ENCODE measurements at regions of chr20 and their contacts with region 1.

Region 1: GRCh38 chr20:41136680-41137613 is at the start of gene PLCG1:
- DNase-seq: peak; percentile 61 to 90 (median 83)
- ATAC-seq: peak; percentile 70
- H3K4me3 ChIP-seq: peak within 1 kb of the TSS; percentile 72 to 81
- H3K4me3 Mint-ChIP-seq: peak within 1 kb of the TSS; percentile 92
- H3K27ac ChIP-seq: peak within 1 kb of the TSS; percentile 60 to 89
- H3K27ac Mint-ChIP-seq: peak within 1 kb of the TSS; percentile 93
- H3K4me1 ChIP-seq: peaks cover 58% of the 10 kb centered on the region
- H3K4me1 Mint-ChIP-seq: peaks cover 63% of the 10 kb centered on the region
- H3K27me3 ChIP-seq: no peaks in the 10 kb centered on the region
- H3K27me3 Mint-ChIP-seq: no peaks in the 10 kb centered on the region
- CTCF ChIP-seq: no peak
- total RNA-seq, gene PLCG1: 335 to 366 TPM

Region 2: DNA sequence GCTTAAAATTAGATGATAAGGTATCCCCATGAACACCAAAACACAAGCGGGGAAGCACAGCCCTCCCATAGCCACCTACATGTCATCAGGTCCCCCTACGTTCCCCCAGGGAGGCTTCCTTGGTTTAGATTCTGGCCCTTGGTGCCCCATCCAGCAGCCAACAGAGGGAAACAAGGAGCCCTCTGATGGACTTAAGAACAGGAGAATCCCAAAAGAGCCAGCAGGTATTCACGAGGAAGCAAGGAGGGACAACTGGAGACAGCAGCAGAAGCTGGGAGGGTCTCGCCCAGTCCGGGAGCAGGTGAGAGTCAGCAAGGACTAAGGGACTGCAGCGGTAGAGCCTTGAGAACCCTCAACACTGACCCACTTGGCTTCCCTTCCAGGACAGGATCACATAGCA is 166.7 kb before region 1 on chr20:
- CTCF ChIA-PET with region 1: interaction called, 6 read pairs
- POLR2A ChIA-PET with region 1: no interaction called
- intact Hi-C with region 1: loop called in 1 of 2 experiments (anchors 1 kb)
- DNase-seq: peak in 1 of 9 experiments; percentile 44
- ATAC-seq: no peak
- H3K4me3 ChIP-seq: no peak overlapping the region
- H3K4me3 Mint-ChIP-seq: no peak overlapping the region
- H3K27ac ChIP-seq: no peak overlapping the region
- H3K27ac Mint-ChIP-seq: no peak overlapping the region
- H3K4me1 ChIP-seq: no peaks in the 10 kb centered on the region
- H3K4me1 Mint-ChIP-seq: peaks cover 7% of the 10 kb centered on the region
- H3K27me3 ChIP-seq: no peaks in the 10 kb centered on the region
- H3K27me3 Mint-ChIP-seq: peaks cover 3% of the 10 kb centered on the region
- CTCF ChIP-seq: no peak

Region 3: DNA sequence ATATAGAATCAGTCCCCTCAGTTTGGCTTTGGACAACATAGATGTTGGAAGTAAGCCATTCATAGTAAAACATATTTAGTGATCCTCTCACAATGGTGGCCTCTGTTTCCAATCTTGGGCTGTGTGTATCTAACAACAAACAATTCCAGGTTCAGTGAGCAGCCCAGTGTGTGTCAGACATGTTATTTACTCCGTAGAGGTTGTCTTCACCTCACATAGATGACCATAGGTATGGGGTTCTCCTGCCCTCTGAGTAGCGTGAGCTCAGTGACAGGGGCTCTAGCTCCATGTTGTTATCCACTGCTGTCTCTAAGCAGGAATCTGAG is 16.7 kb before region 1 on chr20:
- CTCF ChIA-PET with region 1: interaction called, 22 read pairs
- POLR2A ChIA-PET with region 1: no interaction called
- intact Hi-C with region 1: no loop called
- DNase-seq: no peak
- ATAC-seq: no peak
- H3K4me3 ChIP-seq: no peak overlapping the region
- H3K4me3 Mint-ChIP-seq: no peak overlapping the region
- H3K27ac ChIP-seq: no peak overlapping the region
- H3K27ac Mint-ChIP-seq: no peak overlapping the region
- H3K4me1 ChIP-seq: no peaks in the 10 kb centered on the region
- H3K4me1 Mint-ChIP-seq: no peaks in the 10 kb centered on the region
- H3K27me3 ChIP-seq: no peaks in the 10 kb centered on the region
- H3K27me3 Mint-ChIP-seq: no peaks in the 10 kb centered on the region
- CTCF ChIP-seq: no peak

Region 4: DNA sequence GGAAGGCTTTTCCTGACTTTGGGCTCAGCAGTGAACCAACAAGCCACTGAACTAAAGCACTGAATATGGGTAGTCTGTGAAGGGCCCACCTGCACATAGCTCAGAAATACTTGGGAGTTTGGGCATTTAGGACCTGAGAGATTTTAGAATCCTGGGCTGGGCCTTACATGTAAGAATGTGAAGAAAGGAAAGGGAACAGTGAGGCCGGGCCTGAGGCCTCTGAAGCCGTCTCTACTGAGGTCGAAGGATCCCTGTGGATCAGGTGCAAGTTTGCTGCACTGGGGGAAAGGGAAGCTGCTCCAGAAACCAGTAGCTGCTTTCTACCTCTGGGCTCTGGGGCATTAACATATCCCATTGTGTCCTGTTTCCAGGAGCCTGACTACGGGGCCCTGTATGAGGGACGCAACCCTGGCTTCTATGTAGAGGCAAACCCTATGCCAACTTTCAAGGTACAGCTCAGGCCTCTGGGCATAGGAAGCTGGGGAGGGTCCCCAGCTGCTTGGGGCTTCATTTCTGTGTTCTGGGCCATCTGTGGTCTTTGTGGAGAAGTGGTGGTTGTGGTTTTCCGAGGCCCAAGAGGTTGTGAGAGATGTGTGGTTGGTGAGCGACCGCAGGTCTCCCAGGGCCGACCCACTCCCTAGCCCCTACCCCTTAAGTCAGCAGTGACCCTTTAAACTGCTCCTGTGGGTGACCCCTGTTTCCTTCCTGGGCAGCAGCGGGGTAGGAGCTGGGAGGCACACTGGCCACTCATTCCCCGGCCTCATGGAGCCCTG is 30.7 kb after region 1 on chr20:
- CTCF ChIA-PET with region 1: interaction called, 94 read pairs
- POLR2A ChIA-PET with region 1: interaction called, 317 read pairs
- intact Hi-C with region 1: loop called in 1 of 2 experiments (anchors 5 kb)
- DNase-seq: no peak
- ATAC-seq: no peak
- H3K4me3 ChIP-seq: no peak overlapping the region
- H3K4me3 Mint-ChIP-seq: no peak overlapping the region
- H3K27ac ChIP-seq: peak overlapping the region; percentile 46 to 49
- H3K27ac Mint-ChIP-seq: peak overlapping the region; percentile 78
- H3K4me1 ChIP-seq: peaks cover 60% of the 10 kb centered on the region
- H3K4me1 Mint-ChIP-seq: peaks cover 60% of the 10 kb centered on the region
- H3K27me3 ChIP-seq: no peaks in the 10 kb centered on the region
- H3K27me3 Mint-ChIP-seq: no peaks in the 10 kb centered on the region
- CTCF ChIP-seq: no peak

Region 5: DNA sequence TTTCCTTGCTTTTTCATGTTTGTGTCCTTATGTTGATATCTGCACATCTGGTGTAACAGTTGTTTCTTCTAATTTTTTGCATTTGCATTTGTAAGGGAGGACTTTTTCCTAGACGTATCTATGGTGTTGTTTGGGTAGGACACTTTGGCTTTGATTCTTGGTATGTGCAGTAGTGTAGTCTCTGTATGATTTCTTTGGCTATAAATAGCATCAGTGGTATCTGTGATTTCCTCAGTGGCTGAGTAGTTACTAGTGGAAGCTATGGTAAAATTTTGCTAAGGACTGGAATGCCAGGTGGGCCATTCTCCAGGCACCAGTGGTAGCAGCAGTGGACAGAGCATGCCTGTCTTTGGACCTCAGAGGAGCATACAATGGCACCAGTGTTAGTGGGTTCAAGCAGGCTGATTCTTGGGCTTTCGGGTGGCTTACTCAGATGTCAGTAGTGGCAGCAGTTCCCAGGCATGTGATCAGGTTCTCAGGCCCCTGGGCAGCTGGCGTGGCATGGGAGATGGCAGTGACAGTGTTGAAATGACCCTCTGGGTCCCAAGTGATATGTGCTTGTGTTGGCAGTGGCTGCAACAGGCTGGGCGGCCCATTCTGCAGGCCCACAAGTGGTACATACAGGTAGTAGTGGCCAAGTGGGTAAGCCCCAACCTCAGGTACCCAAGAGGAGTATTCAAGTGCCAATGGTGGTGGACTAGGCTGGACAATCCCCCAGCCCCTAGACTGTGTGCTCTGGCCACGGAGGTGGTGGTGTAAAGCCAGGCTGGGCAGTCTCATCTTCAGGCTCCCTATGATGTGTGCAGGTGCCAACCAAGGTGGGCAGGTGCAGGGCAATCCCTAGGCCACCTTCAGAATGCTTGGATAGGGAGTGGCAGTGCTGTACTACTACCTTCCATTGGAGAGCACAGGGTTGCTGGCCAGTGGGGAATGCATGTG is 54.9 kb after region 1 on chr20:
- CTCF ChIA-PET with region 1: interaction called, 11 read pairs
- POLR2A ChIA-PET with region 1: no interaction called
- intact Hi-C with region 1: no loop called
- DNase-seq: no peak
- ATAC-seq: no peak
- H3K4me3 ChIP-seq: no peak overlapping the region
- H3K4me3 Mint-ChIP-seq: no peak overlapping the region
- H3K27ac ChIP-seq: no peak overlapping the region
- H3K27ac Mint-ChIP-seq: no peak overlapping the region
- H3K4me1 ChIP-seq: no peaks in the 10 kb centered on the region
- H3K4me1 Mint-ChIP-seq: peaks cover 5% of the 10 kb centered on the region
- H3K27me3 ChIP-seq: no peaks in the 10 kb centered on the region
- H3K27me3 Mint-ChIP-seq: no peaks in the 10 kb centered on the region
- CTCF ChIP-seq: no peak

Region 6: DNA sequence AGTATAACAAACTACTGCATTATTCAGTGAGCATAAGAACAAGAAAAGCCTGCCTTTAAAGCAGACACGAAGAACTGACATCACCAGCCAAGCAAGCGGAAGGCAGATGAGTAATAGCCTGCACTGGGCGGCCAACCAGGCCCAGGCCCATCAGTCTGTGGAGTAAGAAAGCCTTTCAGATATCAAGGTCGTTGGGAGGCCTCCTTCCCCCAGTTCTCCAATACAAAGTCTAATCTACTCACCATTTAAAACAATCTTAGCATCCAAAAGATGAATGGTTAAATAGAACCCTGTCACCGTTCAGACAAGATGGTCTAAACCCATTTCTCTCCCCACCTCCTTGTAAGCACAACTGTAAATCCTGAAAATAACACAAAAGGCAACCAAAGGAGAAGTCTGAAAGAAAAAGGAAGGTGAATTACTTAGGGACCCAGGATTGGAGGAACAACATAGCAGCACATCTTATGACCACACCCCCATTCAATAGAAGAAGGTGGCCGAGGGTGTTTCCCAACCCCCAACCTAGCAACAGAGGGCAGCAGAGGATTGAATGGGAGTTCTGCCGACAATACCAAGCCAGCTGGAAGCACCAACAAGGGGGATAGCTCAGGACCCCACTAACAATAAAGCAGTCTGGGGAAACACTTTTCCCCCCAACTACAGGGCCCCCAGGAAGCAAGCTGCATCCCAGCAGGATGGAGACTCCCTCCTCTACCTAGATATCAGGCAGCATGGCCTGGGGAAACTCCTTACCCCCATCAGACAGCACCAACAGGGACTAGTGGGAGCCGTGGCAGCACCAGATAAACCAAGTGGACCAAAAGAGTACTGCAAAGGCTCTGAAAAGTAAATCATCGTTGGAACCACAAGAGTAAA is 112.7 kb after region 1 on chr20:
- CTCF ChIA-PET with region 1: interaction called, 29 read pairs
- POLR2A ChIA-PET with region 1: no interaction called
- intact Hi-C with region 1: no loop called
- DNase-seq: peak in 1 of 9 experiments; percentile 12
- ATAC-seq: no peak
- H3K4me3 ChIP-seq: no peak overlapping the region
- H3K4me3 Mint-ChIP-seq: no peak overlapping the region
- H3K27ac ChIP-seq: no peak overlapping the region
- H3K27ac Mint-ChIP-seq: no peak overlapping the region
- H3K4me1 ChIP-seq: no peaks in the 10 kb centered on the region
- H3K4me1 Mint-ChIP-seq: no peaks in the 10 kb centered on the region
- H3K27me3 ChIP-seq: no peaks in the 10 kb centered on the region
- H3K27me3 Mint-ChIP-seq: no peaks in the 10 kb centered on the region
- CTCF ChIP-seq: no peak

Region 7: DNA sequence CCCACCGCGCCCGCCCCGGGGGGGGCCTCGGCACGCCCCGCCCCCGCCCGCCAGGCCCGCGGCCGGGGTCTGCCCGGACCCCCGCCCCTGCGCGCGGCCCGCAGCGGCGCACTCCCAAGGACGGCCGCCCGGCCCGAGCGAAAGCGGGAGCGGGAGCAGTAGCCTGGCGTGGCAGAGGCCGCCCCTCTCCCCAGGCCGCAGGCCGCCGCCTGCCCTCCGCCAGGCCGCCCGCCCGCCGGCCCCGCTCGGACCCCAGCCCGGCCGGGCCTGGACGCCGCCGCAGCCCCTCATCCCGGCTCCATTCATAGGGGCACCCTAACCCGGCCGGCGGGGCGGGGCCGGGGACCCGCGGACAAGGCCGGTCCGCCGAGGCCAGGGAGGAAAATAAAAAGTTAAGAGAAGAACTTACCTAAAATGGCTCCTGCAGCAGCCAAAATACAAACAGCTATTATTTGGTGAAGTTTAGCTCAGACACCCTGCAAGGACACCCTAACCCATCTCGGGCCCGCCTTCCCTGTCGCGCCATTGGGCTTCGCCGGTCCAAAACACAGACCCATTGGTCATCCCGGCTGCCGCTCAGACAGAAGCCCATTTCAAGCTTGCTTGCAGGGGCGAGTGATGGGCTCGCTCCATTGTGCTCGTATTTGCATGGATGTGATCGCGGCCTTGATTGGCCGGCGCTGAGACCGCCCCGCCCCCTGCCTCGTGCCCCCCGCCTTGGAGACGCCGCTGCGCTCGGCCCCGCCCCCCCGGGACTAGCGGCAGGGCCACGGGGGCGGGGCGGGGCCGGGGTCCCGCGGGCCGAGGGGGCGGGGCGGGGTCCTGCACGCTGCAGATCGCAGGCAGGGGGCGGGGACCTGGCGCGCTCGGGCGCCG is 481.2 kb after region 1 on chr20 and contains the start of gene CHD6:
- CTCF ChIA-PET with region 1: no interaction called
- POLR2A ChIA-PET with region 1: no interaction called
- intact Hi-C with region 1: loop called (anchors 5 to 10 kb)
- DNase-seq: peak; percentile 97 to 100 (median 99)
- ATAC-seq: peak; percentile 92
- H3K4me3 ChIP-seq: peak within 1 kb of the TSS; percentile 65 to 67
- H3K4me3 Mint-ChIP-seq: peak within 1 kb of the TSS; percentile 92
- H3K27ac ChIP-seq: peak within 1 kb of the TSS; percentile 60 to 68
- H3K27ac Mint-ChIP-seq: peak within 1 kb of the TSS; percentile 91
- H3K4me1 ChIP-seq: peaks cover 23% of the 10 kb centered on the region
- H3K4me1 Mint-ChIP-seq: peaks cover 47% of the 10 kb centered on the region
- H3K27me3 ChIP-seq: no peaks in the 10 kb centered on the region
- H3K27me3 Mint-ChIP-seq: no peaks in the 10 kb centered on the region
- CTCF ChIP-seq: no peak
- total RNA-seq, gene CHD6: 113 to 122 TPM

Measured in CD8-positive, alpha-beta T cell (primary cell).